WTC11 (cell line): ENCODE measurements at regions of chr6 and their contacts with region 1.

Region 1: GRCh38 chr6:163554663-163555062 is 140.1 kb downstream of the QKI start:
- DNase-seq: peak; percentile 75
- ATAC-seq: peak; percentile 83
- H3K4me3 Mint-ChIP-seq: no peak overlapping the region
- H3K27ac Mint-ChIP-seq: no peak overlapping the region
- H3K4me1 Mint-ChIP-seq: peaks cover 18% of the 10 kb centered on the region
- H3K27me3 Mint-ChIP-seq: no peaks in the 10 kb centered on the region
- CTCF ChIP-seq: peak; percentile 55

Region 2: DNA sequence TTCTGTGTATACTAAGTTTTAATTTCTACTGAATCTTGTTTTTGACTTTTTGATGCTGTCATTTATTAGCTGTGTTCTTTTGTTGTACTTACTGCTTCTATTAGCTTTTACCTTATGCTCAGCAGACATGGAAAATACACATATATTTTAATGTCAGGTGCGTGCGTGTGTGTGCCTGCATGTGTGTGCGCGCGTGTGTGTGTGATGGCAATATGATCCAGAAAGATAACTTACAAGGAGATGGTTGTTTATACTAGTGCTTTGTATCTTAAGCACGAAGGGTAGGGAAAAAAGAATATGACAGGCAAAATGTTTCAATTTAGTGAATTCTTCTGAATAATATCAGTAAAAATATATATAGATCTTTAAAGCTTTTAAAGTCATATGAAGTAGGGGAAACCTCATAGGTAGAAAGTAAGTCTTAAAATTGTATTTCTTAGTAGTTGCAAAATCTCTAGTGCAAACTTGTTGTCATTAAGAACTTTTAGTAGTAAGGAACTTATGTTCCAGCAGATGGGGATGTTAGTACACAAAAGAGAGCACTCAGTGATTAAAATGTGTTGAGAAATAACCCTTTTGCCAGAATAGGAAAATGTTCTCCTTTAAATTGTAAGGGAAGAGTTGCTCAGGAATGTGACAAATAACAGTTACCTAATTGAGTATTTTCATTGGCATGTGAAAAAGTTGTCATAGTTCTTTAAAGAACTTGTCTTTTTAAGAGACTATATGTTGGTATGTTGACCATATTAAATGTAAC is 127.0 kb before region 1 on chr6:
- CTCF ChIA-PET with region 1: interaction called, 13 read pairs
- POLR2A ChIA-PET with region 1: no interaction called
- DNase-seq: no peak
- ATAC-seq: no peak
- H3K4me3 Mint-ChIP-seq: no peak overlapping the region
- H3K27ac Mint-ChIP-seq: no peak overlapping the region
- H3K4me1 Mint-ChIP-seq: peaks cover 76% of the 10 kb centered on the region
- H3K27me3 Mint-ChIP-seq: no peaks in the 10 kb centered on the region
- CTCF ChIP-seq: no peak

Region 3: DNA sequence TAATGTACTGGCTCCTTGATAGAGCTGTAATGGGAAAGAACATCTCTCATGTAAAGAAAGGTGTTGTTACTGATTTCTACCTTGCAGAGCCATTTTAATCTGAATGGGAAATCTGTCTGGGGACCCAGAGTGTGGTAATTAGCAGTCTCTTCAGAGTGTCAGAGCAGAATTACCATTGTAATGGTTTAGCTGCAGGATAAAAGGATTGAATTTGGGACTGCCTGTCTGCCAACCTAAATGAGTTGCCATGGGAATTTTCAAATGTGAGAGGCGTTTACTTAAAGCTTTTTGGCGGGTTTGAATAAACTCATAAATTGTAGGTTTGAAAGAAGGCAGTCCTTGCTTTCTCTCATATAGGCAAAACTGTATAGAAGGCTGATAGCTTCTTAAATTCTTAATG is 11.3 kb before region 1 on chr6:
- CTCF ChIA-PET with region 1: interaction called, 10 read pairs
- POLR2A ChIA-PET with region 1: no interaction called
- DNase-seq: no peak
- ATAC-seq: peak; percentile 92
- H3K4me3 Mint-ChIP-seq: peak overlapping the region; percentile 24
- H3K27ac Mint-ChIP-seq: peak overlapping the region; percentile 89; the same call in 1 of the 2 replicates
- H3K4me1 Mint-ChIP-seq: peaks cover 73% of the 10 kb centered on the region
- H3K27me3 Mint-ChIP-seq: no peaks in the 10 kb centered on the region
- CTCF ChIP-seq: no peak